Heart left ventricle (tissue), 16 donors: ENCODE measurements at regions of chr9 and their contacts with region 1.

Region 1: DNA sequence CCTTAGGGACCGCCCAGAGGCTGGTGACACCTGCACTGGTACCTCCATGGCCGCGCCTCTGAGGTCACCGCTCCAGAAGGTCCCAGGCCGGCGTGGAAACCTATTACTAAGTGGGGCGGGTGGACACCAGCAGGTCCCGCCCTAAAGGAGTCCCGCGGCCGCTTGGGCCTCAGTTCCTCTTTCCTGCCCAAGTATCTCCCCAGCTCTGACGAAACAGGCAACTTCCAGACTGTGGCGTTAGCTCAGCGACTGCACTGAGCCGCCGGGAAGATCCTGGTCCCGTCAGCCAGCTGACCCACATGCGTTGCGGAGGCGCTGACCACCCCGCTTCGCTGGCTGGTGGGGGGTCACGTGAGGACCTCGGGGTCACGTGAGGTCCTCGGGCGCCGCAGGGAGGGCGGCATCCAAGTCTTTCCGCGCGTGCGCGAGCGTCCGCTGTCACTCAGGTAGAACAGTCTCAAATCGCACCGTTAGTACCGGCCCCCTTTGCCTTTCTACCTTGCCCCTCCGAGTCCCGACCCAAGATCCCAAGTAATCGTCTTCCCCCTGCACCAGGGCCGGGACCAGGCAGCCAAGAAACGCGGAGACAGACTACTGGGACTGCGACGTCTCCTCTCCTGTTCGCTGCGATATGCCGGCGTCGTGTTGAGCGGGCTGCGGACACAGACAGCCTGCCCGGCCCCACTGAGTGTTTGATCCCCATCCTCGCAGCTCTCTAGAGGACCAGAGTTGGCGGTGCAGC is 53.7 kb upstream of the KDM4C start:
- DNase-seq: peak; percentile 78 to 95 (median 88)
- ATAC-seq: peak; percentile 85 to 98 (median 97)
- H3K4me3 ChIP-seq: peak overlapping the region; percentile 55 to 83 (median 63)
- H3K27ac ChIP-seq: peak overlapping the region; percentile 19 to 90 (median 70)
- H3K4me1 ChIP-seq: peaks cover 0 to 13% (median 5%) of the 10 kb centered on the region in 12 donors
- H3K27me3 ChIP-seq: no peaks in the 10 kb centered on the region
- CTCF ChIP-seq: no peak
- POLR2A ChIP-seq: peak in 1 of 2 donors; percentile 53

Region 2: DNA sequence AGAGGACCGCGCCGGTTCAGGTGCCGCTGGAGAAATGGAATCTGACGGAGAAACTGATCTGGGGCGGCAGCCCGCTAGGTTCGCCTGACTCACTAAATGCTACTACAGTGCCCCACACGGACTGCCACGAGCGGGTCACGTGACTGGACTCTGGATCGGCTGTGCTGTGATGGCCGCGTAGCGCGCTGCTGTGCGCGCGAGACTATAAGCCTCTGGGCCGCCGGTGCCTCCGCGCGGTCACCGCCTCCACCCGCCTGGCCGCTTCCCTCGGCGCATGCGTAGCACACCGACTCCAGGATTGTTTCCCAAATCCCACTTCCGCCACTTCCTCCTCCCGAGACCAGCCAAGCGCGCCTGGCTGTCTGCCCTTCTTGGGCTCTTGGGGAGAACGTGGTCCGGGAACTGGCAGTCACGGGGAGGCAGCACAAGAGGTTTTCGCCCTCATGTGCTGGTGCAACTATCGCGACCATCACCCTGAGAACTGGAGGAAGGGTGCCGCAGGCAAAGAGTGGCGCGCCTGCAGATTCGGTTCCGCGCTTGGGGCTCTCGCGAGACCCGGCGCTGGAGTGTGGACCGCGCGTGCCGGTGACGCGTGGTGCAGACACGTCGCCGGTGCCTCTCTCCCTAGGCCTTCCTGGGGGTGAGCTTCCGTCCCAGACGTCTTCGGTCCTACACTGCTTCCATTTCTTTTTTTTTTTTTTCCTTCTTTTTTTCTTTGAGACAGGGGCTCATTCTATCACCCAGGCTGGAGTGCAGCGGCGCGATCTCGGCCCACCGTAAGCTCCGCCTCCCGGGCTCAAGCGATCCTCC is 22.7 kb before region 1 on chr9:
- intact Hi-C with region 1: loop called in 1 of 10 experiments (anchors 1 kb)
- DNase-seq: peak; percentile 96 to 99 (median 98)
- ATAC-seq: peak; percentile 98 to 99 (median 99)
- H3K4me3 ChIP-seq: peak overlapping the region; percentile 41 to 81 (median 66)
- H3K27ac ChIP-seq: peak overlapping the region; percentile 77 to 100 (median 95)
- H3K4me1 ChIP-seq: peaks cover 0 to 29% (median 10%) of the 10 kb centered on the region in 12 donors
- H3K27me3 ChIP-seq: no peaks in the 10 kb centered on the region
- CTCF ChIP-seq: peak in 1 of 12 donors; percentile 6
- POLR2A ChIP-seq: peak in 1 of 2 donors; percentile 69

Region 3: GRCh38 chr9:6818320-6818922 is 114.4 kb after region 1 on chr9:
- intact Hi-C with region 1: no loop called
- DNase-seq: no peak
- ATAC-seq: no peak
- H3K4me3 ChIP-seq: no peak overlapping the region
- H3K27ac ChIP-seq: no peak overlapping the region
- H3K4me1 ChIP-seq: no peaks in the 10 kb centered on the region
- H3K27me3 ChIP-seq: no peaks in the 10 kb centered on the region
- CTCF ChIP-seq: no peak
- POLR2A ChIP-seq: no peak